Tibial artery (tissue), 4 donors: ENCODE measurements at regions of chr2 and their contacts with region 1.

Region 1: DNA sequence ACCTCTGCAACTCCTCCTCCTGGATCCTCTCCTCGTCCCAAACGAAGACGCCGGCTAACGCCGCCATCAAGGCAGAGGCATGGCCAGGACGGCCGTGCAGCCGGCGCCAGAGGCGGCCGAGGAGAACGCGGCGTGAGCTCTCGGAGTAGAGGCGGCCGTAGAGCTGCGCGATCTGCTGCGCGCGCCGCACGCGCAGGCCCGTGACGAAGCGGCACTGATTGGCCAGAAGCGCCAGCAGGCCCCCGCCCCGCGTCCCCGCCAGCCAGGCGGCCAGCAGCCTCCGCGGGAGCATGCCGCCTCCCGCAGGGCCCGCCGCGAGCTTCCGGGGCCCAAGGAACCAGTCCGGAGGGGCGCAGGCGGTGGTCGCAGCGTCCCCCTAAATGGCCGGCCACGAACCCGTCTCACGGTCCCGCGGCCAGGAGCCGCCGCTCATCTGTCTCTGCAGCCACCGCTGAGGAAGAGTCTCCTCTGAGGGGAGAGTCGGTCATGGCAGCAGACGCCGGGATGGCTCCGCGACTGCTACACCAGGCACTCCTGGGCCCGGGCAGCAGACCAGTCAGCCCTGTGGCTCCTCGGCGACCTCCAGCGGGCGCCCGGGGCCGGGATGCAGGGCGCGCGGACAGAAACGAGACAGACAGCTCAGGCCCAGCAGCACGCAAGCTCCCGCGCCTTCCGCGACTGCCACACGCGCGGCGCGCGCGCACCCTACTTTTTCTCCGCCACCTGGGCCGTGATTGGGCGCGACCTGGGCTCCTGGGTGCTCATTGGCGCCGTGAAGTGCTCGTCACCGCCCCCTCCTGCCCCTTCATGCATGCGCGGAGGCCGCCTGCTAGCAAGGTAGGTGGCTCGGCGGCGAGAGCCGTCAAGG is at the start of gene STARD7:
- DNase-seq: peak; percentile 98 to 99
- H3K4me3 ChIP-seq: peak within 1 kb of the TSS; percentile 86 to 90
- H3K27ac ChIP-seq: peak within 1 kb of the TSS; percentile 92
- H3K4me1 ChIP-seq: peaks cover 0 to 53% (median 42%) of the 10 kb centered on the region in 4 donors
- H3K27me3 ChIP-seq: no peaks in the 10 kb centered on the region
- CTCF ChIP-seq: no peak

Region 2: DNA sequence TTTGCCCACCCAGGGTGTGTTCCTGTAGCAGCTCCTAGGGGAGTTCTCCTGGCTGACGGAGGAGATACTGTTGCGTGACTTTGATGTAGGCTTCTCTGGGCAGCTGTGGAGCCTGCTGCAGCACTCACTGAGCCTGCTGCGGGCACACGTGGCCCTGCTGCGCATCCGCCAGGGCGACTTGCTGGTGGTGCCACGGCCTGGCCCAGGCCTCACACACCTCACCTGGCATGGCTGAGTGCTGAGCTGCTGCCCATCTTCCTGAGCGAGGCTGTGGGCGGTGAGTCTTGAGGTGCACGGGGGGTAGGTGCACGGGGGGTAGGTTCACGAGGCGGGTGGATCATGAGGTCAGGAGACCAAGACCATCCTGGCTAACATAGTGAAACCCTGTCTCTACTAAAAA is 408.5 kb before region 1 on chr2:
- intact Hi-C with region 1: no loop called
- DNase-seq: no peak
- H3K4me3 ChIP-seq: no peak overlapping the region
- H3K27ac ChIP-seq: no peak overlapping the region
- H3K4me1 ChIP-seq: no peaks in the 10 kb centered on the region
- H3K27me3 ChIP-seq: no peaks in the 10 kb centered on the region
- CTCF ChIP-seq: no peak

Region 3: GRCh38 chr2:96251721-96252292 is 43.4 kb after region 1 on chr2:
- intact Hi-C with region 1: no loop called
- DNase-seq: peak; percentile 83 to 93
- H3K4me3 ChIP-seq: peak overlapping the region; percentile 10 to 27
- H3K27ac ChIP-seq: peak overlapping the region; percentile 73 to 80
- H3K4me1 ChIP-seq: peaks cover 0 to 35% (median 31%) of the 10 kb centered on the region in 4 donors
- H3K27me3 ChIP-seq: no peaks in the 10 kb centered on the region
- CTCF ChIP-seq: no peak

Region 4: DNA sequence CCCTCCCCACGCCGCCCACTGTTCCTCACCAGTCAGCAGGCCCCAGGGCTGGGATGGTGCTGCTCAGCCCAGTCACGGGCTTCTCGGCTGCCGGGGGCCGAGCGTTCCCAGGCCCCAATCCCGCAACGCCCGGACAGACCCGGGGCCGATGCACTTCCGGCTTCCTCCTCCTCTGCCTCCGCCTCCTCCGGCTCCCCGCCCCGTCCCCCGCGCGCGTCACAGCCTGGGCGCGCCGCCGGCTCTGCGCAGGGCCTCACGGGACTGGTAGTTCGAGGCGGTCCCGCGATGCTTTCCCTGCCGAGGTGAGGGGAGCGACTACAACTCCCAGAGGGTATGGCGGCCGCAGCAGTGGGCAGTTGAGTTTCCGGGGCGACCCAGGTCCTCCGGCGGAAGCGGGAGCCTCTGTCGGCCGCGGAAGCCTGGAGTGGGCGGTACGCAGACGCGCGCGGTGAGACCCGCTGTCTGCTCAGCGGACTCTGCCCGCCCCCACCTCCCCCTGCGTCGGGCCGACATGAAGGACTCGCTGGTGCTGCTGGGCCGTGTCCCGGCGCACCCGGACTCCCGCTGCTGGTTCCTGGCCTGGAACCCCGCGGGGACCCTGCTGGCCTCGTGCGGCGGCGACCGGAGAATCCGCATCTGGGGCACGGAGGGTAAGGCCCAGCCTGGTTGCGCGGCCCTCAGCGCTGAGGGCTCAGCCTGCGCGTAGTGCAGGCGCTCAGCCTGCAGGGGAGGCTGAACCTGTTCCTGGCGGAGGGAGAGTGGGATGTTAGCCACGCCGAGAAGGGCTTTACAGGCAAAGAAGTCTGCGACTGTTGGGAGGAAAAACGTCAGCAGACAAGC is 57.7 kb after region 1 on chr2 and contains the starts of genes CIAO1 and TMEM127:
- intact Hi-C with region 1: loop called (anchors 5 kb)
- DNase-seq: peak; percentile 98 to 99
- H3K4me3 ChIP-seq: peak within 1 kb of the TSS; percentile 70 to 97
- H3K27ac ChIP-seq: peak within 1 kb of the TSS; percentile 88 to 97
- H3K4me1 ChIP-seq: peaks cover 0 to 53% (median 42%) of the 10 kb centered on the region in 4 donors
- H3K27me3 ChIP-seq: no peaks in the 10 kb centered on the region
- CTCF ChIP-seq: peak; percentile 31 to 43

Region 5: DNA sequence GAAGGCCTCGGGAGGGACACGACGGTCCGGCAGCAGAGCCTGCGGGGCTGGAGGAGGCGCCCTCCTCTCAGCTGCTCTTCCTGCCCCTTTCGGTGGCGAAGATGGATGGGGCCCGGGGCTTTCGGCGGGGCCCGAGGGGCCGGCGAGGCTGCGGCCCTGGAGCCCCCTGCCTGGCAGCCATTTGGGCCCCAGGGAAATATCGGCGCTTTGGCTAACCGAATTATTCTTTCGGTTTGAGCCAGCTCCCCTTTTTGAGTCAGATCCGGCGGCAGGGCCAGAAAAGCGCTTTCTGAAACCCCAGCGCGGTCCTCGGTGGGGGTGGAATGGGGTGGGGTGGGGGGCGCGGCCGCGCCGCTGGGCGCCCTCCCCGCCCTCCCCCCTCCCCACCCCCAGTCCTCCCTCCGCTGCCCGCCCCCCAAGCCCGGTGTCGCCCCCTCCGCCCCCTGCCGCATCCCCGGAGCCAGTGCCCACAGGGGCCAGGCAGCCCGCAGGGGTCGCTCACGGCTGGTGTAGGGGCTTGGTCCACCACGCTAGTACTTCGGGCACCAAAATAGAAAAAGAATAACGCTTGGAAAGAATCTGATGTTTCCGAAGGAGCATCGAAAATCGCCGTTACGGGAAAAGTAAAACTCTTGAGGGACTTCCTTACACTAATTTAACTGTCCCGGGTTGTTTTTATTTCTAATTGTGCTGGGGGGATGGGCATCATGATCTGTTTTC is 319.1 kb after region 1 on chr2:
- intact Hi-C with region 1: loop called (anchors 10 kb)
- DNase-seq: no peak
- H3K4me3 ChIP-seq: peak overlapping the region; percentile 60 to 63
- H3K27ac ChIP-seq: peak overlapping the region; percentile 89 to 97
- H3K4me1 ChIP-seq: peaks cover under 1 to 52% (median 46%) of the 10 kb centered on the region in 4 donors
- H3K27me3 ChIP-seq: no peaks in the 10 kb centered on the region
- CTCF ChIP-seq: peak in 1 of 2 experiments; percentile 45